Activated naive CD4-positive, alpha-beta T cell treated with anti-CD3 and anti-CD28 coated beads for 36 hours (primary cell): ENCODE measurements at regions of chr4 and their contacts with region 1.

Region 1: GRCh38 chr4:99405433-99406115 is 29.6 kb downstream of the ADH7 start:
- DNase-seq: peak; percentile 77
- H3K4me3 Mint-ChIP-seq: no peak overlapping the region
- H3K27ac Mint-ChIP-seq: no peak overlapping the region
- H3K4me1 Mint-ChIP-seq: no peaks in the 10 kb centered on the region
- H3K27me3 Mint-ChIP-seq: no peaks in the 10 kb centered on the region

Region 2: GRCh38 chr4:98467627-98468072 is 937.9 kb before region 1 on chr4:
- CTCF ChIA-PET with region 1: no interaction called
- intact Hi-C with region 1: loop called (anchors 1 kb)
- DNase-seq: peak; percentile 85
- H3K4me3 Mint-ChIP-seq: peak overlapping the region; percentile 65
- H3K27ac Mint-ChIP-seq: no peak overlapping the region
- H3K4me1 Mint-ChIP-seq: peaks cover 16% of the 10 kb centered on the region
- H3K27me3 Mint-ChIP-seq: no peaks in the 10 kb centered on the region

Region 3: DNA sequence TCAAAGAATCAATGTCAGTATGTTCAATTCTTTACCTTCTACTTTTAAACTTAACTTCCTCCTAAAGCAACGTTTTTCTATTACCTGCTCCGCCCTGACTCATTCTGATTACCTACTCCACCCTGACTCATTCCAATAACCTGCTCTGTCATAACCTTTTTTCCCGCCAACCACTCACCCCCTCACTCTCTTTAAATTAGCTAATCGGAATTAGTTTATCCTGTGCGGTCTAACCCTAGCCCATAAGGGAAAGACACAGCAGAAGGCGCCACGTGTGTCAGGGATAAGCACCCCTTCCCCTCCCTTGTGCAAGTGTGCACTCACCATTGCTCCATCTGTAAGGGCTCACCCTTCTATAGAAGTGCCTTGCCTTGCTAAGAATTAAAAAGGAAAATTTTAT is 541.0 kb before region 1 on chr4:
- CTCF ChIA-PET with region 1: no interaction called
- intact Hi-C with region 1: loop called (anchors 10 kb)
- DNase-seq: peak; percentile 46
- H3K4me3 Mint-ChIP-seq: no peak overlapping the region
- H3K27ac Mint-ChIP-seq: no peak overlapping the region
- H3K4me1 Mint-ChIP-seq: peaks cover 8% of the 10 kb centered on the region
- H3K27me3 Mint-ChIP-seq: no peaks in the 10 kb centered on the region

Region 4: GRCh38 chr4:98939892-98940298 is 465.7 kb before region 1 on chr4:
- CTCF ChIA-PET with region 1: no interaction called
- intact Hi-C with region 1: loop called (anchors 2 kb)
- DNase-seq: no peak
- H3K4me3 Mint-ChIP-seq: no peak overlapping the region
- H3K27ac Mint-ChIP-seq: no peak overlapping the region
- H3K4me1 Mint-ChIP-seq: peaks cover 20% of the 10 kb centered on the region
- H3K27me3 Mint-ChIP-seq: no peaks in the 10 kb centered on the region

Region 5: DNA sequence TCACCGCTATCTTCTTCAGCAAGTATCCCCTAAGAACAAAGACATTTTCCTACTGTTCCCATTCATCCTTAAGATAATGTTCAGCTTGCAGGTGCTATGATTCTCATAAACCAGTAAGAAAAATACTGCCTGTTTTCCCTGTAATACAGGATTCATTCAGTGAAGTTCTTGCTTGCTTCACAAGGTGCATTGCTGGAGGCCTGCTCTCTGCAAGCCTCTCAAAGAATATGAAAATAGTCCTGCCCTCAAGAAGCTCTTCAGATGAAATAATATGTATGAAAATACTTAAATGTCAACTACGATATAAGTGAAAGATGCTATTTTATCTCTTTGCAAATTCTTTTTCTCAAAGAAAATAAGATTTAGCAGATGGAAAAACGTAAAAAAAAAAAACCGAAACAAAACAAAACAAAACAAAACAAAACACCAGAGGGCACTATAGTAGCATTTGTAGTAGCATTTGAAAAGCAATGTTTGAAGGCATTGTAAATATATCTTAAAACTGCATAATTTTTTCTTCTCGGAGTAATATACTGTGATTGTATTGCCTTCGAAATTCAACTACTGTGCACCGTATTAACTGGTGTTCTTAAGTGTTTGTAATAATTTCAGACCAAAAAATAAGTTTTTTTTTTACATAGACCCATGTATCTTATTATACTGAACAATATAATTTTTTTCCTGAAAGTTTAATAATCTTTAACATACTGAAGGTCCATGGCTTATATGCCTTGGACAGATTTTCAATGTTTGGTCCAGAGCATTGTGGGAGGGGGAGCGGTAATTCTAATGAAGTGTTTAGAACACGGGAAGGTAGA is 287.5 kb before region 1 on chr4:
- CTCF ChIA-PET with region 1: interaction called, 5 read pairs
- intact Hi-C with region 1: loop called (anchors 1 kb)
- DNase-seq: no peak
- H3K4me3 Mint-ChIP-seq: no peak overlapping the region
- H3K27ac Mint-ChIP-seq: no peak overlapping the region
- H3K4me1 Mint-ChIP-seq: no peaks in the 10 kb centered on the region
- H3K27me3 Mint-ChIP-seq: no peaks in the 10 kb centered on the region